ENCODE measurements at regions of chr1 and their contacts with region 1.

Region 1: GRCh38 chr1:201114236-201115131 is 2.3 kb upstream of the CACNA1S start:
- DNase-seq: peak; percentile 89
- ATAC-seq: peak; percentile 99
- H3K4me3 ChIP-seq: peak overlapping the region; percentile 67
- H3K27ac ChIP-seq: no peak overlapping the region; the same call in 1 of the 2 replicates
- H3K4me1 ChIP-seq: peaks cover 2% of the 10 kb centered on the region; the same call in 1 of the 2 replicates
- H3K27me3 ChIP-seq: peaks cover 54% of the 10 kb centered on the region
- CTCF ChIP-seq: peak; percentile 88
- POLR2A ChIP-seq: no peak
- RAD21 ChIP-seq: peak; percentile 87

Region 2: DNA sequence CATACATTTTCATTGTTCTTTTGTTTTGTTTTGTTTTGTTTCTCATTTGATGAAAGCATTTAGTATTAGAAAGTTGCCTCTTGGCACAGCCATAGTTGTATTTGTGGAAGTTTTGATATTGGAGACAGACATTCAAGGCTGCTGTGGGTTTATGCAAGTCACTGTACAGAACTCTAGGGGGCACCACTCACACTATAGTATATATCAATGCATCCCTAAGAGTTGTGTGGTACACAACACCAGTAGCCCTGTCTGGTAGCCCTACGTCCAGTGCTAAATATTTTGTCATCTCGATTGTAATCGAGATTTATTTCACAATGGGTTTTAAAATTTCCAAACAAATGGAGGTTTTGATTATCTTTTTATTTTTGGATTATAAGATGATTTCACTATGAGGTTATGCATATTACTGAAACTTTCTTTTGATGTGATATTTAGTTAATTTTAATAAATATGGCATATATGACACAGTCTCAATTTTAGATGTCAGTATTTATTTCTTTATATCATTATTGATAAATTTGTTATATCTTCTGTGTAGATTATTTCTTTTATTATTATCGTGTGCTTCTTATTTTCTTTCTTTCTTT is 974.7 kb before region 1 on chr1:
- CTCF ChIA-PET with region 1: no interaction called
- POLR2A ChIA-PET with region 1: no interaction called
- dilution Hi-C with region 1: no loop called
- in situ Hi-C with region 1: no loop called
- intact Hi-C with region 1: no loop called
- DNase-seq: peak; percentile 68
- ATAC-seq: peak; percentile 91
- H3K4me3 ChIP-seq: no peak overlapping the region
- H3K27ac ChIP-seq: no peak overlapping the region
- H3K4me1 ChIP-seq: no peaks in the 10 kb centered on the region
- H3K27me3 ChIP-seq: no peaks in the 10 kb centered on the region
- CTCF ChIP-seq: peak; percentile 66
- POLR2A ChIP-seq: no peak
- RAD21 ChIP-seq: peak; percentile 76

Region 3: GRCh38 chr1:200971955-200972711 is 142.4 kb before region 1 on chr1:
- CTCF ChIA-PET with region 1: no interaction called
- POLR2A ChIA-PET with region 1: no interaction called
- dilution Hi-C with region 1: no loop called
- in situ Hi-C with region 1: no loop called
- intact Hi-C with region 1: loop called (anchors 1 kb)
- DNase-seq: peak; percentile 38
- ATAC-seq: peak; percentile 77
- H3K4me3 ChIP-seq: no peak overlapping the region
- H3K27ac ChIP-seq: no peak overlapping the region
- H3K4me1 ChIP-seq: no peaks in the 10 kb centered on the region
- H3K27me3 ChIP-seq: peaks cover 5% of the 10 kb centered on the region; the same call in 1 of the 2 replicates
- CTCF ChIP-seq: peak; percentile 71
- POLR2A ChIP-seq: no peak
- RAD21 ChIP-seq: peak; percentile 71